ENCODE measurements at regions of chr7 and their contacts with region 1.

Region 1: GRCh38 chr7:108525985-108526767 is at the start of gene PNPLA8:
- DNase-seq: peak; percentile 100
- H3K4me3 ChIP-seq: peak within 1 kb of the TSS; percentile 82
- H3K27ac ChIP-seq: peak within 1 kb of the TSS; percentile 94
- H3K4me1 ChIP-seq: peaks cover 13% of the 10 kb centered on the region
- H3K27me3 ChIP-seq: no peaks in the 10 kb centered on the region
- CTCF ChIP-seq: no peak
- total RNA-seq, gene PNPLA8: 19.2 and 19.5 TPM in 2 replicates

Region 2: GRCh38 chr7:108421720-108422331 is 104.3 kb before region 1 on chr7:
- CTCF ChIA-PET with region 1: no interaction called
- POLR2A ChIA-PET with region 1: no interaction called
- intact Hi-C with region 1: no loop called
- DNase-seq: no peak
- H3K4me3 ChIP-seq: no peak overlapping the region
- H3K27ac ChIP-seq: peak overlapping the region; percentile 94
- H3K4me1 ChIP-seq: peaks cover 76% of the 10 kb centered on the region
- H3K27me3 ChIP-seq: no peaks in the 10 kb centered on the region
- CTCF ChIP-seq: no peak

Region 3: DNA sequence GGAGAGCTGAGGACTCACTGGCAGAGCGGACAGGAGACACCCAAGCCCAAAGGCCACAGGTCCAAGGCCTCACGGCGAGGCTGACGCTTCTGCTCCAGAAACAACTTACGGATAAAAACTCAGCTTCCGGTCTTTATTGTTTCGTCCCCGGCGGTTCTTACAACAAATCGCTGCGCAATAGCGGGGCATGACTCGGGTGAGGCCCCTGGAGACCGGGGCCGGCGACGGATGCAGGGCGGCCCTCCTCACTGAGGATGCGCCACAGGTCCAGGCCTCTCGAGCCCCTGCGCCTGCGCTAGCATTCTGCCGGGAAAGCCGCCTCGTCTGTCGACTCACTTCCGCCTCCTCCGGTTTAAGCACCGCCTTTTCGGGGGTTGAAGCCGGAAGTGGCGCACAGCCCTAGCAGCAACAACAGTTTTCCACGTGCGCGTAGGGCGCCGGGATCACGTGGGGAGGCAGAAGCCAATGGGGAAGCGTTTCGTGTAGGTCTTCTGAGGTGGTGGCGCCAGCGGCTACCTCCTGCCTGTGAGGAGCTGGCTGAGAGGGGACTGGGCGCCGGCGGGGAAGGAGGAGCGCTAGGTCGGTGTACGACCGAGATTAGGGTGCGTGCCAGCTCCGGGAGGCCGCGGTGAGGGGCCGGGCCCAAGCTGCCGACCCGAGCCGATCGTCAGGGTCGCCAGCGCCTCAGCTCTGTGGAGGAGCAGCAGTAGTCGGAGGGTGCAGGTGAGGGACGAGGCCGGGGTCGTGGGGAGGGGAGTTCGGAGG is 43.4 kb after region 1 on chr7 and contains the starts of genes DNAJB9 and THAP5:
- CTCF ChIA-PET with region 1: no interaction called
- POLR2A ChIA-PET with region 1: no interaction called
- intact Hi-C with region 1: loop called (anchors 2 kb)
- DNase-seq: peak; percentile 100
- H3K4me3 ChIP-seq: peak within 1 kb of the TSS; percentile 77
- H3K27ac ChIP-seq: peak within 1 kb of the TSS; percentile 94
- H3K4me1 ChIP-seq: peaks cover 27% of the 10 kb centered on the region
- H3K27me3 ChIP-seq: no peaks in the 10 kb centered on the region
- CTCF ChIP-seq: no peak
- total RNA-seq, gene DNAJB9: 8.1 and 12.9 TPM in 2 replicates
- total RNA-seq, gene THAP5: 38.1 and 39.4 TPM in 2 replicates